ENCODE measurements at regions of chr1 and their contacts with region 1.

Region 1: GRCh38 chr1:205658943-205659581 is 21.2 kb downstream of the SLC45A3 start:
- DNase-seq: peak; percentile 58 to 83 (median 70)
- ATAC-seq: peak; percentile 95
- H3K4me3 ChIP-seq: no peak overlapping the region
- H3K4me3 Mint-ChIP-seq: no peak overlapping the region
- H3K27ac ChIP-seq: no peak overlapping the region
- H3K27ac Mint-ChIP-seq: no peak overlapping the region
- H3K4me1 ChIP-seq: peaks cover 5% of the 10 kb centered on the region
- H3K4me1 Mint-ChIP-seq: no peaks in the 10 kb centered on the region
- H3K27me3 ChIP-seq: no peaks in the 10 kb centered on the region
- H3K27me3 Mint-ChIP-seq: peaks cover 4% of the 10 kb centered on the region
- CTCF ChIP-seq: peak; percentile 85

Region 2: DNA sequence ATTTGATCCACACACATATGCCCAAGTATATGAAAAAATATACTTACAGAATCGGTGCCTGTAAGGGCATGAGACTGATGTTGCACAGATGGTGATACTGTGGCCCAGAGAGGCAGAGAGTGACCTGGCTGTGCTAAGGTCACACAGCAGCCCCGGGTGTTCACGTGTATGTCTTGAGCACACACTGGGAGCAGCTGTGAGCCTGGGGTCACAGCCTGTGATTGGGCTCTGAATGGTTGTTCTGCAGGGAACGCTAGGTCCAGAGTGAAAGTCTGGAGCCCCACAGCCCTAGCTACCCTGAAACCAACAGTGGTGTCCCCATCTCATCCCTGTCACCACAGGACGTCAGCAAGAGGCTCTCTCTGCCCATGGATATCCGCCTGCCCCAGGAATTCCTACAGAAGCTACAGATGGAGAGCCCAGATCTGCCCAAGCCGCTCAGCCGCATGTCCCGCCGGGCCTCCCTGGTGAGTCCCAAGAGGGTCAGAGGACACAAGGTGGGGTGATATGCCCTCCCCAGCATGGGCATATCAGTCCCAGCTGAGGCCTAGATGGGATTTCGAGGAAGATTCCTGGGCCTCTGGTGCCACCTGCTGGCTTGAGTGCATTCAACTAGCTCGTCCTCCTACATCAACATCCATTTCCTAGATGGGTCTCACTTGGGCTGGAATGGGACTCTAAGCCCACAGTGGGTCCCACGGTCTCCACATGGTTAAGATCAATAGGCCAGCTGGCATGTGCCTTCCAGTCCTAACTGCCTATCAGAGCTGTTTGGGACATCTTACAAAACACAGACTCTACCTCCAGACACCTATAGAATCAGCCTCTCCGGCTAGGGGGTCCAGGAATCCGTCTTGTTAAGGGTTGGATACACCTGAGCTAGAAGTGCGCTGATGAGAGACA is 134.9 kb before region 1 on chr1:
- CTCF ChIA-PET with region 1: interaction called, 49 read pairs
- POLR2A ChIA-PET with region 1: interaction called, 3 read pairs
- intact Hi-C with region 1: loop called (anchors 1 kb)
- DNase-seq: peak; percentile 48 to 83 (median 68)
- ATAC-seq: peak; percentile 61
- H3K4me3 ChIP-seq: no peak overlapping the region
- H3K4me3 Mint-ChIP-seq: no peak overlapping the region
- H3K27ac ChIP-seq: no peak overlapping the region
- H3K27ac Mint-ChIP-seq: no peak overlapping the region
- H3K4me1 ChIP-seq: peaks cover 4% of the 10 kb centered on the region
- H3K4me1 Mint-ChIP-seq: no peaks in the 10 kb centered on the region
- H3K27me3 ChIP-seq: peaks cover 0 to 4% of the 10 kb centered on the region in 2 experiments
- H3K27me3 Mint-ChIP-seq: no peaks in the 10 kb centered on the region
- CTCF ChIP-seq: peak; percentile 74

Region 3: GRCh38 chr1:205591522-205592351 is 67.3 kb before region 1 on chr1:
- CTCF ChIA-PET with region 1: interaction called, 175 read pairs
- POLR2A ChIA-PET with region 1: interaction called, 74 read pairs
- intact Hi-C with region 1: loop called (anchors 1 kb)
- DNase-seq: peak; percentile 81 to 94 (median 88)
- ATAC-seq: peak; percentile 85
- H3K4me3 ChIP-seq: peak overlapping the region; percentile 50
- H3K4me3 Mint-ChIP-seq: peak overlapping the region; percentile 90
- H3K27ac ChIP-seq: peak overlapping the region; percentile 23 to 45
- H3K27ac Mint-ChIP-seq: peak overlapping the region; percentile 99
- H3K4me1 ChIP-seq: peaks cover 31% of the 10 kb centered on the region
- H3K4me1 Mint-ChIP-seq: peaks cover 50% of the 10 kb centered on the region
- H3K27me3 ChIP-seq: no peaks in the 10 kb centered on the region
- H3K27me3 Mint-ChIP-seq: no peaks in the 10 kb centered on the region
- CTCF ChIP-seq: peak; percentile 96

Region 4: GRCh38 chr1:205783904-205784303 is 124.8 kb after region 1 on chr1:
- CTCF ChIA-PET with region 1: interaction called, 4 read pairs
- POLR2A ChIA-PET with region 1: no interaction called
- intact Hi-C with region 1: loop called (anchors 2 kb)
- DNase-seq: no peak
- ATAC-seq: no peak
- H3K4me3 ChIP-seq: no peak overlapping the region
- H3K4me3 Mint-ChIP-seq: no peak overlapping the region
- H3K27ac ChIP-seq: no peak overlapping the region
- H3K27ac Mint-ChIP-seq: no peak overlapping the region
- H3K4me1 ChIP-seq: peaks cover 8% of the 10 kb centered on the region
- H3K4me1 Mint-ChIP-seq: peaks cover 7% of the 10 kb centered on the region
- H3K27me3 ChIP-seq: no peaks in the 10 kb centered on the region
- H3K27me3 Mint-ChIP-seq: no peaks in the 10 kb centered on the region
- CTCF ChIP-seq: no peak

Region 5: DNA sequence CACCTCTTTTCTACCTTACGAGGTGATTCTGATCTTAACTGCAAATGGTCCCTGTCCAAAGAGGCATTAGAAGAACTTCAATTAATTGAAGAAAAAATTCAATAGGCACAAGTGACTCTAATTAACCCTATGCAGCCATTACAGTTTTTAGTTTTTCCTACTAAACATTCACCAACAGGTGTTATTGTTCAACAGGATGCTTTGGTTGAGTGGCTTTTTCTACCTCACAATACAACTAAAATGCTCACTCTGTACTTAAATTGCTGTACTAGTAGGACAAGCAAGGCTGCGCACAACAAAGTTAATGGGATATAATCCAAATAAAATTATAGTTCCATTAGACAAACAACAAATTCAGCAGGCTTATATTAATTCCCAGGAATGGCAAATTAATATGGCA is 202.5 kb after region 1 on chr1:
- CTCF ChIA-PET with region 1: no interaction called
- POLR2A ChIA-PET with region 1: no interaction called
- intact Hi-C with region 1: no loop called
- DNase-seq: no peak
- ATAC-seq: no peak
- H3K4me3 ChIP-seq: no peak overlapping the region
- H3K4me3 Mint-ChIP-seq: no peak overlapping the region
- H3K27ac ChIP-seq: no peak overlapping the region
- H3K27ac Mint-ChIP-seq: no peak overlapping the region
- H3K4me1 ChIP-seq: no peaks in the 10 kb centered on the region
- H3K4me1 Mint-ChIP-seq: no peaks in the 10 kb centered on the region
- H3K27me3 ChIP-seq: no peaks in the 10 kb centered on the region
- H3K27me3 Mint-ChIP-seq: no peaks in the 10 kb centered on the region
- CTCF ChIP-seq: no peak

Region 6: DNA sequence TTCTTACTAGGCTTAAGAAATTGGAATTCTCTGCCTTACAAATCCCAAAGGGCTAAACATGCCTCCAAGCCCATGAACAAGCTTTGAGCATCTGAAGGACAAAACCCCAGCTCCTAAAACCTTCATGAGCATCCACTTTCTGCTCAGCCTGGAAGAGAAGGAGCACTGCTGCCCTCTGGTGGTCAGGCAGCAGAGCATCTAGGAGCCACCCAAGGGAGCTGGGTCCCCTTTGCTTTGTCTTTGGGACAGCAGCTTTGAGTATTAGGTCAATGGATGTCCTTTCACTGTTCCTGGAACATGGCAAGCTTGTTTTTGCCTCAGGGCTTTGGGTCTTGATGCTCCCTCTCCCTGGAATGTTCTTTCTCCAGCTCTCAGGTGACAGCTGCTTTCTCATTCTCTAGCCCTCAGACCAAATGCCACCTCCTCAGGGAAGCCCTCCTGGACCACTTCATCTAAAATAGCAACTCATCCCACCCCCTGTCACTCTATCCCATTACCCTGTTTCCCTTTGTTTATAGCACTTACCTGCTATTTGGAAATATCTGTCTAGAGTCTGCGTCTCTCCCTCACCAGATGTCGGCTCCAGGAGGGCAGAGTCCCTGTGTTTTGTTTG is 318.4 kb after region 1 on chr1:
- CTCF ChIA-PET with region 1: interaction called, 31 read pairs
- POLR2A ChIA-PET with region 1: interaction called, 5 read pairs
- intact Hi-C with region 1: loop called (anchors 1 to 5 kb)
- DNase-seq: peak; percentile 62 to 88 (median 72)
- ATAC-seq: peak; percentile 80
- H3K4me3 ChIP-seq: no peak overlapping the region
- H3K4me3 Mint-ChIP-seq: no peak overlapping the region
- H3K27ac ChIP-seq: no peak overlapping the region
- H3K27ac Mint-ChIP-seq: no peak overlapping the region
- H3K4me1 ChIP-seq: no peaks in the 10 kb centered on the region
- H3K4me1 Mint-ChIP-seq: no peaks in the 10 kb centered on the region
- H3K27me3 ChIP-seq: no peaks in the 10 kb centered on the region
- H3K27me3 Mint-ChIP-seq: peaks cover 4% of the 10 kb centered on the region
- CTCF ChIP-seq: peak; percentile 89

Region 7: DNA sequence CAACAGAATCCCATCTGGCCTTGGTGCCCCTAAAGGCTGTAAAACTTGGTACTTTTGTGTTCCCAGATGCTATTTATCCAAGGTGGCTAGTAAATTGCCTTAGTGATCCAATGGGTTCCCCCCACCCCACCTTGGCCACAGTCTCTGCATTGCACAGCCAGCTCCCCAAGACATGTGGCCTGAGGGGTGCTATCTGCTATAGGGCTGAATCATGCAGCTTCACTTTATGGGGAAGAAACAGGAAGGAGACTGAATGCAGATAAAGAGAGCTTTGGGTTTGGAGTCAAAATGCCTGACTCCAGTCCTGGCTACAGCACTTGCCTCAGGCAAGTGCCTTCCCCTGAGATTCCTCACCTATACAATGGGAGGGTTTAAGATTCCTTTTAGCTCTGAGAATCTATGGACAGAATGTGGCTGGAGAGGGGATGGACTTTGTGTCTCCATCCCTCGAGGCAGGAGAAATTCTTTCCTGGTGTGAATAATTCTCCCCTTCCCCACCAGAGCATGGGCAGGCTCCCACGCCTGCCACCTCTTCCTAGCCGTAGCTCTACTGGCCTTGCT is 400.4 kb after region 1 on chr1:
- CTCF ChIA-PET with region 1: no interaction called
- POLR2A ChIA-PET with region 1: no interaction called
- intact Hi-C with region 1: no loop called
- DNase-seq: no peak
- ATAC-seq: no peak
- H3K4me3 ChIP-seq: no peak overlapping the region
- H3K4me3 Mint-ChIP-seq: no peak overlapping the region
- H3K27ac ChIP-seq: no peak overlapping the region
- H3K27ac Mint-ChIP-seq: no peak overlapping the region
- H3K4me1 ChIP-seq: no peaks in the 10 kb centered on the region
- H3K4me1 Mint-ChIP-seq: no peaks in the 10 kb centered on the region
- H3K27me3 ChIP-seq: no peaks in the 10 kb centered on the region
- H3K27me3 Mint-ChIP-seq: no peaks in the 10 kb centered on the region
- CTCF ChIP-seq: no peak